ENCODE measurements at regions of chr2 and their contacts with region 1.

Region 1: DNA sequence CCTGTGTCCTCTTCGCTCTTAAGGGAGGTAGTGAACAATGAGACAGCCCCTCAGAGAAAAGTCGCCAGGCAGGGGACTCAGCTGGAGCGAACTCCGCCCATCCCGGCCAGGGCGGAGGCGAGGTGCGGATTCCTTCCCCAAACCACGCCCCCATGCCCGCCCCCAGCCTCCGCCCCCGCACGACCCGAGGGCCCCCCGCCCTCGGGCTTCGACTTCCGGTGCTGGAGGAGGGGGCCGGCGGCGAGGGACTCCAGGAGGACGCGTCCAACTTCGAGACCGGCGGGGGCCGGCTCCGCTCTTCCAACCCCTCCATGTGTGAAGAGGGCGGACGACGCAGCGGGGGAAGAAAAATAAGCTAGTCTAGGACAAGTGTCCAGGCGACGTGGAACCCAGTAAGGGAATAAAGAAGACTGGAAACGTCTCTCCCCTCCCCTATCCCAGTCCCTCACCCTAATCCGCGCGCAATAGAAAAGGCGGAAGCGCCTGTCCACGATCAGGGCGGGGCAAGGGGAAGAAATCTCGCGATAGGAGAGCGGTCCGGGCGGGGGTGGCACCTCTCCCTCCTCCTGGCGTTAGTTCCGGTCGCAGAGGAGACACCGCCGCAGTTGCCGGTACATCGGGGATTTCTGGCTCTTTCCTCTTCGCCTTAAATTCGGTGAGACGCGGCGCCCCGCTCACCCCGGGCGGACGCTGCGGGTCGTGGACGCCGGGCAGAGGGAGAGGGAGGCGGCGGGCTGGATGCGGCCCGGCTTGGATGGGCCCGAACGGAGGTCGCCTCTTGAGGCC is at the start of gene BZW1:
- DNase-seq: peak; percentile 97 to 98 (median 98)
- H3K4me3 ChIP-seq: peak within 1 kb of the TSS; percentile 58 to 67
- H3K4me3 Mint-ChIP-seq: peak within 1 kb of the TSS; percentile 95 to 100 (median 98)
- H3K27ac ChIP-seq: peak within 1 kb of the TSS; percentile 97
- H3K27ac Mint-ChIP-seq: peak within 1 kb of the TSS; percentile 96 to 99 (median 98)
- H3K4me1 ChIP-seq: peaks cover 41% of the 10 kb centered on the region
- H3K4me1 Mint-ChIP-seq: peaks cover 35 to 62% (median 43%) of the 10 kb centered on the region in 4 donors
- H3K27me3 ChIP-seq: no peaks in the 10 kb centered on the region
- H3K27me3 Mint-ChIP-seq: no peaks in the 10 kb centered on the region
- total RNA-seq, gene BZW1: 126 to 133 TPM

Region 2: GRCh38 chr2:200525882-200526651 is 285.5 kb before region 1 on chr2 and contains the start of gene SGO2:
- CTCF ChIA-PET with region 1: no interaction called
- POLR2A ChIA-PET with region 1: no interaction called
- intact Hi-C with region 1: loop called (anchors 1 kb)
- DNase-seq: peak; percentile 93 to 97 (median 95)
- H3K4me3 ChIP-seq: peak within 1 kb of the TSS; percentile 82 to 98
- H3K4me3 Mint-ChIP-seq: peak within 1 kb of the TSS; percentile 91 to 97 (median 93)
- H3K27ac ChIP-seq: peak within 1 kb of the TSS; percentile 55
- H3K27ac Mint-ChIP-seq: peak within 1 kb of the TSS; percentile 83 to 93 (median 85)
- H3K4me1 ChIP-seq: peaks cover 14% of the 10 kb centered on the region
- H3K4me1 Mint-ChIP-seq: peaks cover 6 to 15% (median 12%) of the 10 kb centered on the region in 4 donors
- H3K27me3 ChIP-seq: no peaks in the 10 kb centered on the region
- H3K27me3 Mint-ChIP-seq: no peaks in the 10 kb centered on the region
- total RNA-seq, gene SGO2: 4.4 to 4.8 TPM

Region 3: DNA sequence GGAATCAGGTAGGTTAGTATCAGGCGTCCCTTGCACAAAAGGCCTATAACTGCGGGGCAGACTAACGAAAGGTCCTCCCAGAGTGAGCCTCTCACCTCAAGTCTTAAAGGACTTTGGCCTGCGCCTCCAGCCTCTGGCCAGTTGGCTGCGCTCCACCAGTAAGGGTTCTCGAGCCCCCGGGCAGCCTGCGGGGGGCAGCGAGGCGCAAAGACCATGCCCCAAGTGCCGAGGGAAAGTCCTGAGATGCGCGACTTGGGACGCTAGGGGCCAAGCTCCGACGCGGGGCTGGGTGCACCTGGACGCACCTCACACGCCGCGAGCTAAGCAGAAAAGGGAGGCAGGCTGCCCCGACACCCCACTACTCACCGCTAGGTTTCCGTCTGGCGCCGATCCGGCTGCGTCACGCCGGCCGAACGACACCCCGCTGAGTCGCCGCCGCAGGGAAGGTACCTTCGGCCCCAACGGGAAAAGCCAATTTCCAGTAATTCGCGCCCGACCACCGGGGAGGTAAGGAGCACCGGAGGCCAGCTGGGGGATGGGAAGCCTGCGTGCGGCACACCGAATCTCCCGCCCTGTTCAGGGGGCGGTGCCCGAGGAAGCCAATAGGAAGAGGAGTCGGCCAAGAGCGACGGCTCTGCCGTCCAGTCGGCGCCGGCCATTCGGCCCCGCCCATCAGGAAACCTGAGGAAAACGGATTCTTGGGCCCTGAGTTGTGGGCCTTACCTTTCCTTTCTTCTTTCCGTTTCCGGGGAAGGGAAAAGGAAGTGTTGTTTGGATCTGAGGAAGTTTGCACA is 151.8 kb after region 1 on chr2 and contains the start of gene ORC2:
- CTCF ChIA-PET with region 1: no interaction called
- POLR2A ChIA-PET with region 1: interaction called, 4 read pairs
- intact Hi-C with region 1: loop called (anchors 1 kb)
- DNase-seq: peak; percentile 93 to 97 (median 94)
- H3K4me3 ChIP-seq: peak within 1 kb of the TSS; percentile 87 to 95
- H3K4me3 Mint-ChIP-seq: peak within 1 kb of the TSS; percentile 96 to 99 (median 98)
- H3K27ac ChIP-seq: peak within 1 kb of the TSS; percentile 79
- H3K27ac Mint-ChIP-seq: peak within 1 kb of the TSS; percentile 98 to 100 (median 99)
- H3K4me1 ChIP-seq: peaks cover 47% of the 10 kb centered on the region
- H3K4me1 Mint-ChIP-seq: peaks cover 35 to 73% (median 56%) of the 10 kb centered on the region in 4 donors
- H3K27me3 ChIP-seq: no peaks in the 10 kb centered on the region
- H3K27me3 Mint-ChIP-seq: no peaks in the 10 kb centered on the region
- total RNA-seq, gene ORC2: 72.2 to 76.4 TPM

Region 4: GRCh38 chr2:201176081-201176481 is 364.6 kb after region 1 on chr2:
- CTCF ChIA-PET with region 1: no interaction called
- POLR2A ChIA-PET with region 1: no interaction called
- intact Hi-C with region 1: loop called (anchors 5 kb)
- DNase-seq: no peak
- H3K4me3 ChIP-seq: no peak overlapping the region
- H3K4me3 Mint-ChIP-seq: no peak overlapping the region
- H3K27ac ChIP-seq: no peak overlapping the region
- H3K27ac Mint-ChIP-seq: peak overlapping the region in 1 of 7 donors; percentile 4
- H3K4me1 ChIP-seq: peaks cover 7% of the 10 kb centered on the region
- H3K4me1 Mint-ChIP-seq: peaks cover 8 to 26% (median 12%) of the 10 kb centered on the region in 4 donors
- H3K27me3 ChIP-seq: no peaks in the 10 kb centered on the region
- H3K27me3 Mint-ChIP-seq: no peaks in the 10 kb centered on the region

Region 5: DNA sequence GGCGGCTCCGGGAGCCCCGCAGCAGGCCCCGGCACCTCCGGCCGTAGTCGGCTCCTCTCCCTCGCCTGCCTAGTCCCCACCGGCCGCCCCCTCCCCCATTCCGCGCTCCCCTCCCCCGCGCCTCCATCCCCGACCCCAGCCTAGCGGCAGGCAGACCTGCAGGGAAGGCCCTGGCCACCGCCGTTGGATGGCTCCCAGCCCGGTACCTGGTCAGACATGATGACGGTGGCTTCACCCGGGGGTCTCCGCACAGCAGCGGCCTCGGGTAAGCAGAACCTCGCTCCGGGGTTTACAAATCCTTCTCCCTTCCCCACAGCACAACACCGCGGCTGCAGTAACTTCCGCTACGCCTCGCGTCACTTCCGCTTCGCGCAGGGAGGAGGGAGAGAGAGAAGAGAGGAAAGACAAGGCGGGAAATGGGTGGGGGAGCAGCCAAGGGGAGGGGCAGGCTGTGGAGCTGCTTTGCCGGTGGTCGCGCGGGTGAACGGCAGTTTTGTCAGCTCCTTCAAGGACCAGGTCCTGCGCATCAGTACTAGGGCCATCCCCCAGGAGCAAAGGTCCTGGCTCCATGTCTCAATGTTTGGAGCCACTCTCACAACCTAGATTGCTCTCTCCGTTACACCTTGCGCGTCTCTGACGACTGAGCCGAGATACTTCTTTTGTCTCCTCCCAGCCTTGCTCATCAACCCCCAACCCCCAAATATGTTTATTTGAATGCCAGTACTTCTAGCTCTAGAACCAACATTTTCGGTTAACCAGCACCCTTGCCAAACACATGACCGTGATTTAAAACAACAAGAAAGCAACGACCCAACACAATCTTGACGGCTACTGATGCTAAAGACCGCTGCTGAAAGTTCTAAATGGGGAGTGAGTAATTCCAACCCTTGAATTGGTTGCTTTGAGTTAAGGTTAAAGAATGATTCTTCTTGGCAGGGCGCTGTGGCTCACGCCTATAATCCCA is 1427.0 kb after region 1 on chr2 and contains the start of gene SUMO1:
- CTCF ChIA-PET with region 1: no interaction called
- POLR2A ChIA-PET with region 1: no interaction called
- intact Hi-C with region 1: loop called (anchors 5 kb)
- DNase-seq: peak; percentile 90 to 96 (median 90)
- H3K4me3 ChIP-seq: peak within 1 kb of the TSS; percentile 52 to 96
- H3K4me3 Mint-ChIP-seq: peak within 1 kb of the TSS; percentile 95 to 100 (median 98)
- H3K27ac ChIP-seq: peak within 1 kb of the TSS; percentile 81
- H3K27ac Mint-ChIP-seq: peak within 1 kb of the TSS; percentile 89 to 100 (median 98)
- H3K4me1 ChIP-seq: peaks cover 17% of the 10 kb centered on the region
- H3K4me1 Mint-ChIP-seq: peaks cover 16 to 48% (median 34%) of the 10 kb centered on the region in 4 donors
- H3K27me3 ChIP-seq: no peaks in the 10 kb centered on the region
- H3K27me3 Mint-ChIP-seq: no peaks in the 10 kb centered on the region
- total RNA-seq, gene SUMO1: 53.2 to 53.5 TPM